Endothelial cell of umbilical vein (primary cell): ENCODE measurements at regions of chr3 and their contacts with region 1.

Region 1: DNA sequence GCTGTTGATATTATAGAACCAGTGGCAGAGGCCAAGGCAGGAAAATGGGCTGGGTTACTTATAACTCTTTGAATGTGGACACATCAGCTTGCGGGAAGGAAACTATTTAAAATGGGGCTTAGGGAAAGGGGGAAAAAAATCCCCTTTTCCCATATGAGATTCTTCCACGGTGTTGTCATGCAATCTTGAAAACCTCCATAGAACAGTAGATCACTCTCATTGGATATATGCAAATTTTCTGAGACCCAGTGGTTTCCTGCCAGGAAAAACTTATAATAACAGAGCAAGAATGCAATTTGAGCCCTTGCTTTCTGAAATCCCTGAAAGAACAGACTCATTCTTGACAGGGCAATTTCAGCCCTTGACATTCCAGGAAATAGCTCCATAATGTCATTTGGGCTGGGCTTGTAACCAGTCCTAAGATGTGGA is 31.1 kb downstream of the TMEM212 start:
- DNase-seq: peak; percentile 98
- H3K4me3 ChIP-seq: no peak overlapping the region
- H3K27ac ChIP-seq: peak overlapping the region; percentile 97
- H3K4me1 ChIP-seq: peaks cover 53% of the 10 kb centered on the region
- H3K27me3 ChIP-seq: no peaks in the 10 kb centered on the region
- CTCF ChIP-seq: no peak
- POLR2A ChIP-seq: peak; percentile 76

Region 2: GRCh38 chr3:171788546-171789351 is 85.5 kb before region 1 on chr3:
- CTCF ChIA-PET with region 1: no interaction called
- POLR2A ChIA-PET with region 1: interaction called, 6 read pairs
- dilution Hi-C with region 1: no loop called
- intact Hi-C with region 1: loop called (anchors 1 kb)
- DNase-seq: peak; percentile 92
- H3K4me3 ChIP-seq: no peak overlapping the region
- H3K27ac ChIP-seq: peak overlapping the region; percentile 99
- H3K4me1 ChIP-seq: peaks cover 75% of the 10 kb centered on the region
- H3K27me3 ChIP-seq: no peaks in the 10 kb centered on the region
- CTCF ChIP-seq: no peak
- POLR2A ChIP-seq: no peak

Region 3: GRCh38 chr3:171838218-171838761 is 36.0 kb before region 1 on chr3:
- CTCF ChIA-PET with region 1: interaction called, 4 read pairs
- POLR2A ChIA-PET with region 1: interaction called, 4 read pairs
- dilution Hi-C with region 1: no loop called
- intact Hi-C with region 1: loop called (anchors 1 kb)
- DNase-seq: peak; percentile 94
- H3K4me3 ChIP-seq: no peak overlapping the region
- H3K27ac ChIP-seq: peak overlapping the region; percentile 77
- H3K4me1 ChIP-seq: peaks cover 64% of the 10 kb centered on the region
- H3K27me3 ChIP-seq: no peaks in the 10 kb centered on the region
- CTCF ChIP-seq: peak in 1 of 2 donors; percentile 12
- POLR2A ChIP-seq: no peak

Region 4: DNA sequence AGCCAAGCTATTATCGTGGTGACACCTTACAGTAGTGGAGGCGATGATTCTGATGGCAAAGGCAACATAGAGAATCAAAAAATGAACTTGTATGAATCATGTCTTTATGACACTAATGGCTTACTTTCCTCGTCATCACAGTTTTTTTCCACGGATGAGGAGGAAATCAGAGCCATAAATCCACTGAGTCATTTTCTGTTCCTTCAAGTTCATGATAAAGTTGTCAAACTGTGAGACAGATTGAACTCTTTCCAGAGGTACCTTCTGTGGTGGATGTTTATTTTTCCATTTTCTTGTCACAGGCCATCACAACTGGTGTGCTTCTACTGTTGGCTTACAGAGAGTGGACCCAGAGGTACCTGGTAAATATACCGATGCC is 22.6 kb before region 1 on chr3:
- CTCF ChIA-PET with region 1: no interaction called
- POLR2A ChIA-PET with region 1: no interaction called
- dilution Hi-C with region 1: no loop called
- intact Hi-C with region 1: no loop called
- DNase-seq: peak; percentile 98
- H3K4me3 ChIP-seq: no peak overlapping the region
- H3K27ac ChIP-seq: peak overlapping the region; percentile 90
- H3K4me1 ChIP-seq: peaks cover 25% of the 10 kb centered on the region
- H3K27me3 ChIP-seq: no peaks in the 10 kb centered on the region
- CTCF ChIP-seq: no peak
- POLR2A ChIP-seq: peak; percentile 49

Region 5: DNA sequence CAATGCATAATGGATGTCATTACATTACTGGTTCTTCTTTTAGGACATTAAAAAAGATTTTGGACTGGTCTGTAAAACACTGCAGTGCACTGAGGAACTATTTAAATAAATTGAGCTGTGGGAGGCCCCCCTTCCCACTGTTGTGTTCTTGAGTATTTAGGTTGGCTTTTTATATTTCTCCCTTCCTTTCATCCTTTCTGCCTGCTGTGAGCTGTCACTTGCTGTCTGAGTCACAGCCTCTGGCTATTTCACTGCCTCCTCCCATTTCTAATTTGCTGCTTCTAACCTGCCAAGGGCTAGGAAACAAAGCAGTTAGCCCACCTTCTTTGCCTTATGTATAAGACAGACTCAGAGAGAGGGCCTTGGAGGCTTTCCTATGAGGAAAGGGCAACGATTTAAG is 76.1 kb after region 1 on chr3:
- CTCF ChIA-PET with region 1: no interaction called
- POLR2A ChIA-PET with region 1: no interaction called
- dilution Hi-C with region 1: no loop called
- intact Hi-C with region 1: loop called (anchors 1 kb)
- DNase-seq: peak; percentile 72
- H3K4me3 ChIP-seq: no peak overlapping the region
- H3K27ac ChIP-seq: no peak overlapping the region
- H3K4me1 ChIP-seq: peaks cover 18% of the 10 kb centered on the region
- H3K27me3 ChIP-seq: no peaks in the 10 kb centered on the region
- CTCF ChIP-seq: no peak
- POLR2A ChIP-seq: no peak

Region 6: DNA sequence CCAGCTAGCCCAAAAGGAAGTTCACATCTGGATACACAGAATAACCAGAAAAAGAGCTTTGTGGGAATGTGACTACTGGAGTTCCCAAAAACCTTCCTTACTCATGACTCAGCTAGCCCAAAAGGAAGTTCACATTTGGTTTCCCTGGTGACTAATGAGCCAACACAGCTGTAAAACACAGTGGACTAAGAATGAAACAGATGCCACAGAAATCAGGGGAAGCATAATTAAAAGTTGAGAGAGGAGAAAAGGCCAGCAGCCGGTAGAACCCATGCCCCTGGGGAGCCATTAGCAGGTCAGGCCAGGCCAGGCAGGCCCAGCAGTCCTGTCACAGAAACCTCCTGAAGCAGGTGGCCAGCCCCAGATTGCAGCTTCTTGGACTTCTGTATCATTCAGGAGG is 443.7 kb after region 1 on chr3:
- CTCF ChIA-PET with region 1: no interaction called
- POLR2A ChIA-PET with region 1: no interaction called
- dilution Hi-C with region 1: no loop called
- intact Hi-C with region 1: loop called (anchors 1 kb)
- DNase-seq: peak; percentile 94
- H3K4me3 ChIP-seq: no peak overlapping the region
- H3K27ac ChIP-seq: peak overlapping the region; percentile 96
- H3K4me1 ChIP-seq: peaks cover 32% of the 10 kb centered on the region
- H3K27me3 ChIP-seq: no peaks in the 10 kb centered on the region
- CTCF ChIP-seq: no peak
- POLR2A ChIP-seq: no peak